ENCODE measurements at regions of chr16 and their contacts with region 1.

Region 1: DNA sequence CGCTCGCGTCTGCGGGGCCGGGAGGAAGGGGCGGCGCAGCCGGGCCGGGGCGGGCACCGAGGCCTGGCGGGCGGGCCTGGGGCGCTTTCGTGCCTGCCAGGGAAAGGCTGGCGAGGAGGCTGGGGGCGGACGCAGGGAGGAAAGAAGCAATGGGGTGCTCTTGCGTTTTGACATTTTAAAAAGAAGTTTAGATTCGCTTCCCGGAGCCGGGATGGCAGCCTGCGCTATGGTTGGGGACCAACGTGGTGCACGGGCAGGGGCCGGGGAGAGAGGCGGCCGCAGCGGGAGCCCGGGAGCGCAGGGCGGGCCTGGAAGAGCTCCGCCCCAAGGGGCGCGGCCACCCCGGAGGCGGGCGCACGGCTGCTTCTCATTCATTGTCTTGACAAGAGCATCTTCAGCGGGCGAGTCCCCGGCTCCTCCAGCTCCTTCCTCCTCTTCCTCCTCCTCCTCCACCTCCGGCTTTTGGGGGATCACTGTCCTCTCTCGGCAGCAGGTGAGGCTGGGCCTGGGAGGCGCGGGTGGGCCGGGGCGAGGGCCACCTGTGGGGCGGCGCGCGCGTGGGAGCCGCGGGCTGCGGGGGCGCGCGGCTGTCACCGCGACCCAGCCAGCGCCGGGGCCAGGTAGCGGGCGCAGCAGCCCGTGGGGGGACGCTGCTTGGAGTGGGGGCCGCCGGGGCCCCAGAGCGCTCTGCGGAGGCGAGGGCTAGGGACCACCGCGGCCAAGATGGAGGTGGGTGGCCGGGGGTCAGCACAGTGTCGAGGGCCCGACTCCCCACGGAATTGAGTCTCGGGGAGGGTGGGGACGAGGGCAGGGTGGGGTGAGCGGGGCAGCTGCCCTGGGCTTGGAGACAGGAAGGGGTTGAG is at the start of gene CORO1A:
- DNase-seq: peak; percentile 6
- H3K4me3 ChIP-seq: peak within 1 kb of the TSS; percentile 40
- H3K27me3 ChIP-seq: peaks cover 1% of the 10 kb centered on the region; the same call in 1 of the 2 replicates
- CTCF ChIP-seq: no peak
- polyA plus RNA-seq, gene CORO1A: 1.6 and 2.6 TPM in 2 replicates

Region 2: GRCh38 chr16:30112197-30113030 is 71.0 kb before region 1 on chr16:
- CTCF ChIA-PET with region 1: no interaction called
- POLR2A ChIA-PET with region 1: interaction called, 15 read pairs
- DNase-seq: no peak
- H3K4me3 ChIP-seq: no peak overlapping the region
- H3K27me3 ChIP-seq: no peaks in the 10 kb centered on the region
- CTCF ChIP-seq: peak; percentile 74

Measured in BJ (cell line).